MCF 10A (cell line): ENCODE measurements at regions of chr17 and their contacts with region 1.

Region 1: DNA sequence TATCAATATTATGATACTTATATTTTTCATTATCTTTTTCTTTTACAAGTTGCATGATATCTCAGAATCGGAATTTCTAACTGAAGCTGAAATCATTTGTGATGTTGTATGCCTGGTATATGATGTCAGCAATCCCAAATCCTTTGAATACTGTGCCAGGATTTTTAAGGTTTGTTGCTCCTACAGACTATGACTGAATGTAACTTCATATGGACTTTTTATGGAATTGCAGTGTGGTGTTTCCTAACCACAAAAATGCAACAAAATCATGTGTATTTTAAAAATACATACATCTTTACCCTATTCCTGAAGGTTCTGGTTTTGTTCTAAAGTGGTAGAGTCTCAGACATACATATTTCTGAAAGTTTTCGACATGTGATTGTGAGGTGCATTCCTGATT is 58.8 kb upstream of the RHBDL3 start:
- DNase-seq: no peak
- H3K4me3 Mint-ChIP-seq: no peak overlapping the region
- H3K27ac Mint-ChIP-seq: no peak overlapping the region
- H3K4me1 Mint-ChIP-seq: peaks cover 6% of the 10 kb centered on the region
- H3K27me3 Mint-ChIP-seq: no peaks in the 10 kb centered on the region
- CTCF ChIP-seq: no peak

Region 2: GRCh38 chr17:32152130-32152529 is 54.7 kb before region 1 on chr17:
- CTCF ChIA-PET with region 1: no interaction called
- POLR2A ChIA-PET with region 1: no interaction called
- intact Hi-C with region 1: no loop called
- DNase-seq: no peak
- H3K4me3 Mint-ChIP-seq: no peak overlapping the region
- H3K27ac Mint-ChIP-seq: peak overlapping the region; percentile 46
- H3K4me1 Mint-ChIP-seq: peaks cover 4% of the 10 kb centered on the region
- H3K27me3 Mint-ChIP-seq: no peaks in the 10 kb centered on the region
- CTCF ChIP-seq: no peak

Region 3: DNA sequence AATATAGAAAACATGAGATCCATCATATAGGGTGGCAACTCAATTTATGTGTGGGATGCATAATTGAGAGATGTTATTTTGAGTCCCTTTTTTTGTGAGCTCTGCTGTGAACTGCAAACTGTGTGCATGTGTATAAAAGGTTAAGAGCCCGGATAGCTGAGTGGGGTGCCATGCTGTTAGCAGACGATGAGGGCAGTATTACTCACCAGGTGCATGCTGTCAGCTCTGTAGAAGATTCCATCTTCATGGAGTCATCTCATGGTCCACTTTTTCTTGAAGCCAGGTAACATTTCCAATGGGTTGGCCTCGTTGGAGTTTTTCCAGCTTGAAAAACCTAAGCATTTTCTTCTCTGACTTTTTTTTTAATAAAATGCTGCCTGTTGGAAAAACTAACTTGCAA is 15.8 kb after region 1 on chr17:
- CTCF ChIA-PET with region 1: interaction called, 12 read pairs
- POLR2A ChIA-PET with region 1: no interaction called
- intact Hi-C with region 1: no loop called
- DNase-seq: peak; percentile 15
- H3K4me3 Mint-ChIP-seq: no peak overlapping the region
- H3K27ac Mint-ChIP-seq: no peak overlapping the region
- H3K4me1 Mint-ChIP-seq: no peaks in the 10 kb centered on the region
- H3K27me3 Mint-ChIP-seq: no peaks in the 10 kb centered on the region
- CTCF ChIP-seq: peak; percentile 16